K562 (cell line): ENCODE measurements at regions of chr12 and their contacts with region 1.

Region 1: GRCh38 chr12:116142936-116143898 is 134.3 kb downstream of the MED13L start:
- DNase-seq: no peak
- ATAC-seq: peak; percentile 34
- H3K4me3 ChIP-seq: no peak overlapping the region
- H3K27ac ChIP-seq: peak overlapping the region; percentile 30; the same call in 2 of the 3 replicates
- H3K4me1 ChIP-seq: peaks cover 8 to 25% of the 10 kb centered on the region in 2 experiments; a peak in 4 of 5 replicates
- H3K27me3 ChIP-seq: no peaks in the 10 kb centered on the region
- CTCF ChIP-seq: no peak
- EP300 ChIP-seq: no peak
- POLR2A ChIP-seq: no peak
- RAD21 ChIP-seq: no peak

Region 2: DNA sequence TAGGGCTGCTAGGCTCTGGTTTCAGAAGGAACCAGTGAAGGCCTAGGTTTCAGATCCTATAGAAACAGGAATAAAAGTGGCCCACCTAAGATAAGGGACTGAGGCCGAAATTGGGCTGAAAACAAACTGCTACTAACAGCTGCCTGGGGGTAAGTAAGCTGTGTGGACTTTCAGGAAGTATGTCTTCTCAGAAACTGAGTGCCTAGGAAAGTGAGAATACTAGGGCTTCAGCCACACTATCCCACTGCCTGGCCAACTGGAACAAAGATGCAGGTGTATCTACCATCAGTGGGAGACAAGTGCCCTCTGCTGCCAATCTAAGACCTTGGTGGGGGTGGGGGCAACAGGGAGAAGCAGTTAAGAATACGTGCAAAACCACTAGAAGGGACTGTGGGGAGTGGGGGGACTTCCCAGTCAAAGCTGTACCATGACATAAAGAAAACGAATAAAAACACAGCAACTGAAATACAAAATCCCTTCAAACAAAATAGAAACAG is 51.8 kb after region 1 on chr12:
- CTCF ChIA-PET with region 1: no interaction called
- POLR2A ChIA-PET with region 1: no interaction called
- in situ Hi-C with region 1: no loop called
- intact Hi-C with region 1: loop called (anchors 10 kb)
- DNase-seq: peak in 1 of 4 experiments; percentile 53
- ATAC-seq: peak; percentile 58
- H3K4me3 ChIP-seq: no peak overlapping the region
- H3K27ac ChIP-seq: peak overlapping the region; percentile 55
- H3K4me1 ChIP-seq: peaks cover 12 to 29% of the 10 kb centered on the region in 2 experiments; a peak in 4 of 5 replicates
- H3K27me3 ChIP-seq: no peaks in the 10 kb centered on the region
- CTCF ChIP-seq: peak in 1 of 3 experiments; percentile 26; a peak in 1 of 6 replicates
- EP300 ChIP-seq: no peak
- POLR2A ChIP-seq: no peak
- RAD21 ChIP-seq: no peak